CD4-positive, alpha-beta memory T cell (primary cell): ENCODE measurements at regions of chr7 and their contacts with region 1.

Region 1: DNA sequence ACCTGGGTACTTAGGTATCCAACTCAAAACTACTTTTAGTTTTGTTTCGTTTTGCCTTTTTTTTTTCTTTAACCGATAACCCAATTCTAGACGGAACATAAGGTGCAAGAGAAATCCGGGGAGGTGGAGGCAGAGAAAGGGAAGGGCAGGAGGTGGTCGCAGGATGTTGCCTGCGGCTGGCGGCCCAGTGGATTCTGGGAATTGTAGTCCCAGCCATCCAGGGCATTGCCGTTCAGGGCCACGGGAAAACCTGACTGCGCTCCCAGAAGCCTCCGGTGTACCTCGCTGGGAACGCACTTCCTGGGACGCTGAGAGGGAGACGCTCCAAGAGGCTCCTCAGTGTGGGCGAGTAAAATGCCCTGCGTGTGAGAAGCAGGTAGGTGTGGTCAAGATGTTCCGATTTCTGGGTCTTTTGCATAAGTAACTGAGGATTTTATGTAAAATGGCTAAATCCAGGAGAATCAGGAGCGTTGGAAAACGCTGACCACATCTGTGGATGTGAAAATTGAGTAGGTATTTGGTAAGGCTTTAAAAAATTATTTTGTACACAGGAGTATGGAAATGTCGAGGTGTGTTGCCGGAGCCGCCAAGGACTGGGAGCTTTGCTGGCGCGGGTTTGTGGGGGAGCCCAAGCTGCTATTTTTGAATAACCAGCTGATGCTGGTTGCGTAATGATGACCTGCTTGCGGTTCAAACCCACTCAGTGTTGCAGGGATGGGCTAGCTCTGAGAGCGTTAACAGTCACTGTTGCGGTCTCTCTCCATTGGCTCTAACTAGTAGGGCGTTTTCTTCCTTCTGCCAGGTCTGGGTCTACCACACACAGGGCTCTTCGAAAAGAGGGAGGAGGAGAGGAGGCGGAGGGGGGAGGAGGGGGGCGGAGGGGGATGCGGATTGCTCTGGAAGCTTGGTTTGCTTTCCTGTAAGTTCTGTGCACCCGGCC is at the start of gene CLDN12:
- DNase-seq: peak; percentile 78 to 94 (median 82)
- H3K4me3 ChIP-seq: peak within 1 kb of the TSS; percentile 89 to 90
- H3K4me3 Mint-ChIP-seq: peak within 1 kb of the TSS; percentile 92 to 98 (median 96)
- H3K27ac ChIP-seq: peak within 1 kb of the TSS; percentile 72
- H3K27ac Mint-ChIP-seq: peak within 1 kb of the TSS; percentile 92 to 98 (median 96)
- H3K4me1 ChIP-seq: peaks cover 10% of the 10 kb centered on the region
- H3K4me1 Mint-ChIP-seq: peaks cover 7 to 21% (median 13%) of the 10 kb centered on the region in 4 donors
- H3K27me3 ChIP-seq: no peaks in the 10 kb centered on the region
- H3K27me3 Mint-ChIP-seq: no peaks in the 10 kb centered on the region
- total RNA-seq, gene CLDN12: 5.7 to 6.1 TPM

Region 2: DNA sequence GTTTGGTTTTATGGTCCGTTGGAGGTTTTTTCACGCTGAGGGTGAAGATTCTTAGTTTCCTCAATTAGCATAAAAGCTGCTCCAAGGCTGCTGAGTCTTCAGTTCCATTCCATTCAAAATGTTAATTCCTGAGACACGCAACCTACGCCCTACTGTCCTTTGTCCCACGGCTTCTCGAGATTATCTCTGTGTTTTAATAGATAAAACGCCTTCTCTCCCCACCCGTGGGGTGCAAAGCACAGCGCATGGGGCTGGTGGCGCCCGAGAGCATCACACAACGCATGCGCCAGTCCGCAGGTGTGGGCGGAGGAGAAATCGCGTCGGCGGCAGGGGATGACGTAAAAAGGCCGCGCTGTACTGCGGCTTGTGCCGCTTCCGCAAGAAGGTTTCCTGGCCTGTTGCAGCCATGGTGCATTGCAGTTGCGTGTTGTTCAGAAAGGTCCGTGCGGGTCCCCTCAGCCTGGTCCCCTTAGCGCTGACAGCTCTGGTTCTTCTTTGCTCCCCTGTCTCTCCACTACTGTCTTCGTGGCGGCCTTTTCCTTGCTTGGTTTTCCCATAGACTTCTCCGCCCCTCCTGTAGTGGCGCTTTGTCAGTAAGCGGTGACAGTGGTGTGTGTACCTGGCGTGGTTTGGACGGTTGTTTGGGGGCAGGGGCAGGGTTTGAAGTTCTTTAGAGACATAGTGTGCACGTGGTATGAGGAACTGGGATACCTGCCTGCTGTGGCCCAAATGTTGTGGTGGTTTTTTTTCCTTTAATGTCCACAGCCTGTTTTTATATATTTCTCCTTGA is 56.9 kb before region 1 on chr7 and contains the start of gene GTPBP10:
- CTCF ChIA-PET with region 1: interaction called, 9 read pairs
- POLR2A ChIA-PET with region 1: interaction called, 11 read pairs
- intact Hi-C with region 1: loop called (anchors 1 kb)
- DNase-seq: peak; percentile 92 to 95 (median 94)
- H3K4me3 ChIP-seq: peak within 1 kb of the TSS; percentile 71 to 92
- H3K4me3 Mint-ChIP-seq: peak within 1 kb of the TSS; percentile 92 to 99 (median 98)
- H3K27ac ChIP-seq: peak within 1 kb of the TSS; percentile 87
- H3K27ac Mint-ChIP-seq: peak within 1 kb of the TSS; percentile 98 to 100 (median 99)
- H3K4me1 ChIP-seq: peaks cover 38% of the 10 kb centered on the region
- H3K4me1 Mint-ChIP-seq: peaks cover 30 to 54% (median 44%) of the 10 kb centered on the region in 4 donors
- H3K27me3 ChIP-seq: no peaks in the 10 kb centered on the region
- H3K27me3 Mint-ChIP-seq: peaks cover 0 to 1% of the 10 kb centered on the region in 2 donors
- total RNA-seq, gene GTPBP10: 45.5 to 46.7 TPM

Region 3: GRCh38 chr7:90613088-90613498 is 209.6 kb after region 1 on chr7:
- CTCF ChIA-PET with region 1: no interaction called
- POLR2A ChIA-PET with region 1: no interaction called
- intact Hi-C with region 1: no loop called
- DNase-seq: no peak
- H3K4me3 ChIP-seq: no peak overlapping the region
- H3K4me3 Mint-ChIP-seq: no peak overlapping the region
- H3K27ac ChIP-seq: no peak overlapping the region
- H3K27ac Mint-ChIP-seq: no peak overlapping the region
- H3K4me1 ChIP-seq: no peaks in the 10 kb centered on the region
- H3K4me1 Mint-ChIP-seq: no peaks in the 10 kb centered on the region
- H3K27me3 ChIP-seq: no peaks in the 10 kb centered on the region
- H3K27me3 Mint-ChIP-seq: peaks cover 2 to 5% of the 10 kb centered on the region in 2 donors